SK-N-SH (cell line): ENCODE measurements at regions of chr22 and their contacts with region 1.

Region 1: DNA sequence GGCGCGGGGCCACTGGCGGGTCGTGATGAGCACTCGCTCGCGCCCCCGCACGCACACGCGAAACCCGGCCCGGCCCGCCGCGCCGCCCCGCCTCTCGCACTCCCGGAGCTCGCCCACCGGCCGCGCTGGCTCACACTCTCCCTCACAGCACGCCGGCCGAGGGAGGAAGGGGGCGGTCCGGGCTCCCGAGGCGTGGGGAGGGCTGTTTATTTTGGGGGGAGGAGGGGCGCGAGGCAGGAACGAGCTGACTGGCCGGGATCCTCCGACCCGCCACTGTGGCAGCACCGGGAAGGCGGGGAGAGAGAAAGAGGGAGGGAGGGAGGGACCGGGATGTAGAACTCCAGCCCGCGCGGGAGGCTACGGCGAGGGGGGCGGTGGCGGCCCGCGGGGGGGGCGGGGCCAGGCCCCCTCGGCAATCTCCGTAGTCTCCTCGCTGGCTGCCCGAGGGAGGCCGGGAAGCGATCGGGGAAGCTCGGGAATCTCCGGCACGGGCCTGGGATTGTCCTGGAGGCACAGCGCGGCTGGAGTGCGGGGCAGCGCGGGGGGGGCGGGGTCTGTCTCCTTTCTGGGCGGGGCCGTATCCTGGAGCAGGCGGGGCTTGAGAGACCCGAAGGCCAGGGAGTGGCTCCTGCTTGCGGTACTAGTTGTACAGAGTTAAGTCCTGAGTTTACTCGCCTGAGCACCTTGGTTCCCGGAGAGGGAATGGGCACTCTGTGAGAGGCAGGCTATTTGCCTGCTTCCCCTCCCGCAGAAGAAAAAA is at the start of gene RBFOX2:
- DNase-seq: peak; percentile 98
- H3K4me3 ChIP-seq: peak within 1 kb of the TSS; percentile 74 to 80
- H3K27ac ChIP-seq: peak within 1 kb of the TSS; percentile 75 to 90
- H3K4me1 ChIP-seq: peaks cover 3 to 10% of the 10 kb centered on the region in 2 experiments; a peak in 3 of 4 replicates
- H3K27me3 ChIP-seq: no peaks in the 10 kb centered on the region
- CTCF ChIP-seq: no peak
- EP300 ChIP-seq: no peak; a peak in 1 of 4 replicates
- RAD21 ChIP-seq: no peak; the same call in 1 of the 2 replicates
- polyA plus RNA-seq, gene RBFOX2: 115 and 151 TPM in 2 replicates

Region 2: DNA sequence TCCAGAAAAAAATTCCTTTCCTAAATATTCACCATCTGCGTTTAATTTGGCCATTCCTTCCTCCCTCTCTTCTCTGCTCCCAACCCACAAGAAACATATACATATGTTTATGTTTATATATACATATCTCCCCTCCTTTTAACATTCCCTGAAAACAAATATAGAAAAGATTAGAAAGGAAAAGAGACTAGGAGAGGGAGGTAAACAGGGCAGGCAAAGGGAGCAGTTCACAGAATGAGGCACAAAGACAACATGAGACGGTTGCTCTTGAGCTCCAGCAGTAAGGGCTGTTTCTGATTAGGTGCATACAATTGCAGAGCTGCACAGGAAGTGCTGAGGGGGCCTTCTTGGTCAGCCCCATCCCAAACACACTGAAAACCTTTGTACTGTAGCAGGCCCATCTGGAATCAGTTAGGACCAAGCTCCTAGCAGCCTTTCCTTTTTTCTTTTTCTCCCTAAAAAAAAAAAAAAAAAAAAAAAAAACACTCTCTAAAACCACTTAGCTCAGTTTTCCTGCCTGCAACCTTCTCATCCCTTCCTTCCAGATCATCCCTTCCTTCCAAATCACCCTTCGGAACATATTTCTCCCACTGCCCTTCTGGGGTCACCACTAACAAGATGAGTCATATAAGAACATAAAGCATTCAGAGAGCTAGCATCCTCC is 57.2 kb before region 1 on chr22:
- CTCF ChIA-PET with region 1: interaction called, 3 read pairs
- POLR2A ChIA-PET with region 1: interaction called, 12 read pairs
- DNase-seq: peak; percentile 65
- H3K4me3 ChIP-seq: peak overlapping the region; percentile 19 to 45; a peak in 3 of 4 replicates
- H3K27ac ChIP-seq: peak overlapping the region; percentile 96 to 100
- H3K4me1 ChIP-seq: peaks cover 66 to 94% of the 10 kb centered on the region in 2 experiments
- H3K27me3 ChIP-seq: no peaks in the 10 kb centered on the region
- CTCF ChIP-seq: no peak
- EP300 ChIP-seq: peak; percentile 92
- RAD21 ChIP-seq: peak; percentile 38; the same call in 1 of the 2 replicates

Region 3: GRCh38 chr22:36017651-36018091 is 11.2 kb before region 1 on chr22:
- CTCF ChIA-PET with region 1: interaction called, 14 read pairs
- POLR2A ChIA-PET with region 1: interaction called, 11 read pairs
- DNase-seq: peak; percentile 68
- H3K4me3 ChIP-seq: no peak overlapping the region
- H3K27ac ChIP-seq: peak overlapping the region; percentile 70 to 95; a peak in 3 of 4 replicates
- H3K4me1 ChIP-seq: peaks cover 47 to 54% of the 10 kb centered on the region in 2 experiments
- H3K27me3 ChIP-seq: no peaks in the 10 kb centered on the region
- CTCF ChIP-seq: no peak
- EP300 ChIP-seq: peak; percentile 13 to 97; a peak in 2 of 4 replicates
- RAD21 ChIP-seq: 0 out of 2 replicates have a peak, but pooled peaks have one; percentile 25